ENCODE measurements at regions of chr6 and their contacts with region 1.

Region 1: DNA sequence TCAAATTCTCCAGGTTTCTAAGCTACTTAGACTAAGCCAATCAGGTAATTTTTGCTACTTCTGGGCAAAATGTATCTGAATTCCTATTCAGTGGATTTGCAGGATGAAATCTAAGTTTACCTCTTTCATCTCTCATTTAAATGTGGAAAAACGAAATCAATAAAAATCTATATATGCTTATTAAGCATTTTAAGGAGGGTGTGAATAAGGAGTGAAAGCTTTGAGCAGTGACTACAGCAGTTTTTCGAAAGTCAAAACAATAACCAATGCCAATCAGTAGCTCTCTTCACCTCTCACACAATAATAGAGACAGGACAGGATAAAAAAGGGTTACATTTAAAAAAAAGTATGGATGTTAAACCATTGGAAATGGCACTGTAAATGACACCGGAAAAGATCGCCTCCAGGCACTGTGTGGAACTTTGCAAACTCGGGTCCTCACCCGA is 476 bp upstream of the BCKDHB start:
- DNase-seq: no peak
- H3K4me3 ChIP-seq: peak overlapping the region; percentile 62 to 87 (median 70)
- H3K27ac ChIP-seq: peak overlapping the region; percentile 82 to 93 (median 88)
- H3K4me1 ChIP-seq: peaks cover 0 to 15% (median 8%) of the 10 kb centered on the region in 4 donors
- H3K27me3 ChIP-seq: no peaks in the 10 kb centered on the region
- CTCF ChIP-seq: no peak
- EP300 ChIP-seq: no peak
- POLR2A ChIP-seq: no peak

Region 2: GRCh38 chr6:80004173-80005072 is 101.6 kb before region 1 on chr6 and contains the start of gene TTK:
- intact Hi-C with region 1: loop called (anchors 1 kb)
- DNase-seq: peak; percentile 95
- H3K4me3 ChIP-seq: peak within 1 kb of the TSS; percentile 55 to 69 (median 64)
- H3K27ac ChIP-seq: peak within 1 kb of the TSS; percentile 82 to 88 (median 86)
- H3K4me1 ChIP-seq: peaks cover 0 to 14% (median 9%) of the 10 kb centered on the region in 4 donors
- H3K27me3 ChIP-seq: no peaks in the 10 kb centered on the region
- CTCF ChIP-seq: no peak
- EP300 ChIP-seq: no peak
- POLR2A ChIP-seq: peak in 1 of 2 donors; percentile 56
- total RNA-seq, gene TTK: 0.16 to 0.55 (median 0.45) TPM

Measured in sigmoid colon (tissue), 7 donors.